ENCODE measurements at regions of chr11 and their contacts with region 1.

Region 1: GRCh38 chr11:71913756-71914526 is 14.5 kb downstream of the XNDC1N start:
- DNase-seq: no peak
- H3K4me3 Mint-ChIP-seq: no peak overlapping the region
- H3K27ac Mint-ChIP-seq: peak overlapping the region; percentile 11
- H3K4me1 Mint-ChIP-seq: peaks cover 22% of the 10 kb centered on the region
- H3K27me3 Mint-ChIP-seq: no peaks in the 10 kb centered on the region

Region 2: DNA sequence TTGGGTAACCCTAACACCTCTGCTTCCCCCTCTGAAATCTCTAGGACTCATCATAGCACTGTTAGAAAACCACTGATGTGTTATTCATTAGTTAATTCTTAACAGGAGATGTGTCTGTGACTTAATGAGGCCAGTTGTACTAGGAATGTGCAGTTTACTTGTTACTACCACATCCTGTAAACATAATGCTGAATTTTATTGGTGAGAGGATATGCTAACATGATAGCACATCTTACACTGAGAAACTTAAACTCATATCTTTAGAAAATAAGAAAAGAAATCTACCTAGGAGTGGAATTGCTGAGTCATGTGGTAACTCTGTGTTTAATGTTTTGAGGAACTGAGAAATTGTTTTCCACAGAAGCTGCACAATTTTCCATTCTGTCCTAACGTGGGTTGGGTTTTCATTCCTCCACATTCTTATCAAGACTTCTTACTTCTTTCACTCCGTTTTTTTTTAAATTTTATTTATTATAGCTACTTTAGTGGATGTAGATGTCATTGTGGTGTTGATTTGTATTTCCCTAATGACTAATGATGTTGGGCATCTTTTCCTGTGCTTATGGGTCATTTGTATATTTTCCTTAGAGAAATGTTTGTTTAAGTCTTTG is 48.6 kb after region 1 on chr11:
- intact Hi-C with region 1: loop called (anchors 1 kb)
- DNase-seq: no peak
- H3K4me3 Mint-ChIP-seq: peak overlapping the region; percentile 43
- H3K27ac Mint-ChIP-seq: peak overlapping the region; percentile 63
- H3K4me1 Mint-ChIP-seq: peaks cover 38% of the 10 kb centered on the region
- H3K27me3 Mint-ChIP-seq: no peaks in the 10 kb centered on the region

Region 3: DNA sequence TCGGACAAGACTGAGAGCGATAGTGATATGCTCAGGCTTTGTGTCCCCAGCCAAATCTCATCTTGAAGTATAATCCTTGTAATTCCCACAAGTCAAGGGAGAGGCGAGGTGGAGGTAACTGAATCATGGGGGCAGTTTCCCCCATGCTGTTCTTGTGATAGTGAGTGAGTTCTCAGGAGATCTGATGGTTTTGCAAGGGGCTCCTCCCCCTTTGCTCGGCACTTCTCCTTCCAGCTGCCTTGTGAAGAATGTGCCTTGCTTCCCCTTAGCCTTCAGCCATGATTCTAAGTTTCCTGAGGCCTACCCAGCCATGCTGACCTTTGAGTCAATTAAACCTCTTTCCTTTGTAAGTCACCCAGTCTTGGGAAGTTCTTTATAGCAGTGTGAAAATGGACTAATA is 295.2 kb after region 1 on chr11:
- intact Hi-C with region 1: no loop called
- DNase-seq: no peak
- H3K4me3 Mint-ChIP-seq: no peak overlapping the region
- H3K27ac Mint-ChIP-seq: no peak overlapping the region
- H3K4me1 Mint-ChIP-seq: no peaks in the 10 kb centered on the region
- H3K27me3 Mint-ChIP-seq: peaks cover 35% of the 10 kb centered on the region